ENCODE measurements at regions of chr19 and their contacts with region 1.

Region 1: GRCh38 chr19:53892981-53893325 is 11.0 kb downstream of the PRKCG start:
- DNase-seq: no peak
- H3K4me3 Mint-ChIP-seq: no peak overlapping the region
- H3K27ac Mint-ChIP-seq: peak overlapping the region; percentile 21
- H3K4me1 Mint-ChIP-seq: peaks cover 8% of the 10 kb centered on the region
- H3K27me3 Mint-ChIP-seq: no peaks in the 10 kb centered on the region
- CTCF ChIP-seq: no peak

Region 2: DNA sequence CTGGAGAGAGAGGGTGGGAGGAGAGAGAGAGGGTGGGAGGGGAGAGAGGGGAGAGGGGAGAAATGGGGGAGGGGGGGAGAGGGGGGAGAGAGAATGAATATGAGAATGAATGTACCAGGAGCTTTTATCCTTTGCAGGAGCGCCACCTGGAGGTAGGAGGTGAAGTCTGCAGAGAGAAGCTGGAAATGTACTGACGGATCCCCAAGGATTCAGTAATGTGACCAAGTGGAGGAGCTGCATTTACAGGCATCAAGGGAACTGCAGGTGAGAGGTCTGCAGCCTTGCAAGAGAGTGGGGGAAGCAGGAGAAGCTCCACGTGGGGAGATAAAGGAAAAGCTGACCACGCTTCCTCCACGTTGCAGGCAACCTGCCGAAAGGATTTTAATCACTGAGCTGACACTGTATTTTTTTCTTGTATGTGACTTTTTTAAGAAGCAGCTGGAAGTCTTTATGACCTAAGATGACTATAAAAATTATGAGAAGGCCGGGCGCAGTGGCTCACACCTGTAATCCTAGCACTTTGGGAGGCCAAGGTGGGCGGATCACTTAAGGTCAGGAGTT is 137.1 kb after region 1 on chr19:
- CTCF ChIA-PET with region 1: interaction called, 13 read pairs
- intact Hi-C with region 1: no loop called
- DNase-seq: peak; percentile 83
- H3K4me3 Mint-ChIP-seq: no peak overlapping the region
- H3K27ac Mint-ChIP-seq: no peak overlapping the region
- H3K4me1 Mint-ChIP-seq: peaks cover 21% of the 10 kb centered on the region
- H3K27me3 Mint-ChIP-seq: no peaks in the 10 kb centered on the region
- CTCF ChIP-seq: peak; percentile 83

Measured in Calu3 (cell line).